WTC11 (cell line): ENCODE measurements at regions of chr4 and their contacts with region 1.

Region 1: DNA sequence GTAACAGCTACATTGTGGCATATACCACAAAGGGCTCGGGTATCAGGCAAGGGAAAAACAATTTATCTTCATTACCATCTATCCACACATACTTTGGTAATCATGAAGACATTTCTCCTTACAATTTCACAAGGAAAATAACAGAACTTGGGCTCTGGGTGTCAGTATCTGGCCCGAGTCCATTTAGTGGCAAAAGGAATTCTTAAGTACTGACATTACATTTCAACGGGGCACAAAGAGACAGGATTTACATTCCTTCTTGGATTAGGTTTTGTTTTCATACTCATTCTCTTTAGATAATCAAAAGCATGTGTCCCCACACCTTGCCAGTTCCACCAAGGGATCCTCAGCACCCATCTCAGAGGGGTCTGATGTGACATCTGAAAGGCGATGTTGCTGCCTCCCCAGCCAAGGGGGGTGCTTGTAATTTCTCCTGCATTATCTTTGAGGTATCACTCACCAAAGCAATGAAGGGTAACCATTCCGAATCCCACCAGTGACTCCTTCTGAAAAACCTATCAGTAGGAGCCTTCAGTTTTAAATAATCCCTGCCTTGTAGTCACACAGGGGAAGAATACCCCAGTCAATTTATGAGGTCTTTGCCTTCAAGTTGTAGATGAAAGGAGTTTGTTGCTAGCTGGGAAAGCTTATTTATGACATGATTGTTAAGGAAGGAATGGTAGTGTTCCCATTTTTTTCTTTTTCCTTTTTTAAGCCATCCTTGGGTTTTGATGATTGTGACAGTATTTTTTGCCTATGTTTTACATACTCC is 118.6 kb downstream of the PALLD start:
- DNase-seq: no peak
- ATAC-seq: no peak
- H3K4me3 Mint-ChIP-seq: no peak overlapping the region
- H3K27ac Mint-ChIP-seq: no peak overlapping the region
- H3K4me1 Mint-ChIP-seq: peaks cover 17% of the 10 kb centered on the region
- H3K27me3 Mint-ChIP-seq: no peaks in the 10 kb centered on the region
- CTCF ChIP-seq: no peak

Region 2: DNA sequence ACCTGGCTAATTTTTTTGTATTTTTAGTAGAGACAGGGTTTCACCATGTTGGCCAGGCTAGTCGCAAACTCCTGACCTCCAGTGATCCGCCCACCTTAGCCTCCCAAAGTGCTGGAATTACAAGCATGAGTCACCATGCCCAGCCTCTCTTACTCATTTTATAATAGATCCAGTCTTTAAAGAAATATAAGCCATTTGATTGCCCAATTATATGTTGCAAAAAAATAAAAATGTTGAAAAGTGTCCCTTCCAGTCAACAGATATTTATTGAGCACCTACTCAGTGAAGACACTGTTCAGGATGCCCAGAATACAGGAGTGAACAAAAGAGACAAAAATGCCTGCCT is 73.9 kb before region 1 on chr4:
- CTCF ChIA-PET with region 1: no interaction called
- POLR2A ChIA-PET with region 1: interaction called, 10 read pairs
- DNase-seq: no peak
- ATAC-seq: no peak
- H3K4me3 Mint-ChIP-seq: no peak overlapping the region
- H3K27ac Mint-ChIP-seq: no peak overlapping the region
- H3K4me1 Mint-ChIP-seq: peaks cover 14% of the 10 kb centered on the region
- H3K27me3 Mint-ChIP-seq: no peaks in the 10 kb centered on the region
- CTCF ChIP-seq: no peak

Region 3: GRCh38 chr4:168751263-168752225 is 136.1 kb after region 1 on chr4:
- CTCF ChIA-PET with region 1: no interaction called
- POLR2A ChIA-PET with region 1: no interaction called
- DNase-seq: no peak
- ATAC-seq: no peak
- H3K4me3 Mint-ChIP-seq: no peak overlapping the region
- H3K27ac Mint-ChIP-seq: no peak overlapping the region
- H3K4me1 Mint-ChIP-seq: no peaks in the 10 kb centered on the region
- H3K27me3 Mint-ChIP-seq: no peaks in the 10 kb centered on the region
- CTCF ChIP-seq: no peak